WTC11 (cell line): ENCODE measurements at regions of chr19 and their contacts with region 1.

Region 1: GRCh38 chr19:48999481-49000325 is 6.0 kb downstream of the RUVBL2 start:
- DNase-seq: peak; percentile 89
- ATAC-seq: peak; percentile 90
- H3K4me3 Mint-ChIP-seq: no peak overlapping the region; the same call in 1 of the 2 replicates
- H3K27ac Mint-ChIP-seq: peak overlapping the region; percentile 88
- H3K4me1 Mint-ChIP-seq: peaks cover 14% of the 10 kb centered on the region
- H3K27me3 Mint-ChIP-seq: no peaks in the 10 kb centered on the region
- CTCF ChIP-seq: peak; percentile 48; the same call in 1 of the 2 replicates

Region 2: DNA sequence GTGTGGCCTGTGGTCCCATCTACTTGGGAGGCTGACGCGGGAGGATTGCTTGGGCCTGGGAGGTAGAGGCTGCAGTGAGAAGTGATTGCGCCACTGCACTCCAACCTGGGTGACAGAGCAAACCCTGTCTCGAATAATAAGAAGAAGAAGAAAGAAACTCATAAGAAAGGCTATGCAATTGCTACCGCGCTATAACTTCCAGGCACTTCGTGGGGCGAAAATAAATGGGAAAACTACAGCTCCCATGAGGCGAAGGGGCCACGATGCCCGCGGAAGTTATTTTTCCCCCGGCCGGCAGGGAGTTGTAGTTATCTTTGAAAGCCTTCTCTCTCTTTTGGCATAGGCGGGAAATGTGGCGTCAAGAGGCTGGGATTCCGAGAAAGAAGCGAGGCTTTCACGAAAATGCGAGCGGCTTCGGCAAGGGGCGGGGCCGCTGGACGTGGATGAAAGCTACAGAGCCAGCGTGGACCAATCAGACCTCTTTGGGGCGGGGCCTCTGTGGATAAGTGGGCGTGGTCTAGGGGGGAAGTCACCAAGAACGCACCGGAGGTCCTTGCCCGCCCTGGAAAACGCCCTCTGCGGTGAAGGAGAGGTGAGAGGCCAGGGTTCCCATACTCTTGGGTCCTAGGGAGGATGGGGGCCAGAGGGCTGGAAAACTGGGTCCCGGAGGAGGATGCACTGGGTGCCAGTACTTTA is 99.8 kb before region 1 on chr19 and contains the start of gene NUCB1:
- CTCF ChIA-PET with region 1: interaction called, 10 read pairs
- POLR2A ChIA-PET with region 1: no interaction called
- DNase-seq: peak; percentile 100
- ATAC-seq: peak; percentile 87
- H3K4me3 Mint-ChIP-seq: peak within 1 kb of the TSS; percentile 97
- H3K27ac Mint-ChIP-seq: peak within 1 kb of the TSS; percentile 99
- H3K4me1 Mint-ChIP-seq: peaks cover 11% of the 10 kb centered on the region
- H3K27me3 Mint-ChIP-seq: peaks cover 9% of the 10 kb centered on the region
- CTCF ChIP-seq: no peak
- total RNA-seq, gene NUCB1: 145 to 153 TPM (median 149 TPM) in 3 replicates

Region 3: DNA sequence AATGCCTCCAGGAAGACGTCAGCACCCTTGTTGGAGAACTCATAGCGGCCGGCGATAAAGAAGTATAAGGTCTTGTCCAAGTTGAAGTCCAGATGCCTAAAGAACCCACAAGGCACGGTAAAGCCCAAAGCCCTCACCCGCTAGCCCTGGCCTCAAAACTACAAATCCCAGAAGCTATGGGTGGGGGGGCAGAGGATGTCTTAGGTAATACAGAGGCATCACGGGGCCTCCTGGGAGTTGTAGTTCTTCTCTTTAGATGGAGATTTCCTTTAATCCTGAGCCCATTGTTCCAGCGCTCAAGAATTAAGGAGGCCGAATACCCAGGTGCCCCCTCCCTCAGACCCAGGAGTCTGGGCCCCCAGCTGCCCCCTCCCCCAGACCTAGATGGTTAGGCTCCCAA is 17.4 kb before region 1 on chr19:
- CTCF ChIA-PET with region 1: interaction called, 16 read pairs
- POLR2A ChIA-PET with region 1: no interaction called
- DNase-seq: no peak
- ATAC-seq: peak; percentile 49
- H3K4me3 Mint-ChIP-seq: no peak overlapping the region
- H3K27ac Mint-ChIP-seq: no peak overlapping the region
- H3K4me1 Mint-ChIP-seq: no peaks in the 10 kb centered on the region
- H3K27me3 Mint-ChIP-seq: no peaks in the 10 kb centered on the region
- CTCF ChIP-seq: no peak

Region 4: GRCh38 chr19:49017666-49018351 is 18.1 kb after region 1 on chr19:
- CTCF ChIA-PET with region 1: interaction called, 78 read pairs
- POLR2A ChIA-PET with region 1: no interaction called
- DNase-seq: peak; percentile 66
- ATAC-seq: peak; percentile 71
- H3K4me3 Mint-ChIP-seq: peak overlapping the region; percentile 73
- H3K27ac Mint-ChIP-seq: no peak overlapping the region
- H3K4me1 Mint-ChIP-seq: peaks cover 23% of the 10 kb centered on the region
- H3K27me3 Mint-ChIP-seq: peaks cover 45% of the 10 kb centered on the region
- CTCF ChIP-seq: no peak

Region 5: DNA sequence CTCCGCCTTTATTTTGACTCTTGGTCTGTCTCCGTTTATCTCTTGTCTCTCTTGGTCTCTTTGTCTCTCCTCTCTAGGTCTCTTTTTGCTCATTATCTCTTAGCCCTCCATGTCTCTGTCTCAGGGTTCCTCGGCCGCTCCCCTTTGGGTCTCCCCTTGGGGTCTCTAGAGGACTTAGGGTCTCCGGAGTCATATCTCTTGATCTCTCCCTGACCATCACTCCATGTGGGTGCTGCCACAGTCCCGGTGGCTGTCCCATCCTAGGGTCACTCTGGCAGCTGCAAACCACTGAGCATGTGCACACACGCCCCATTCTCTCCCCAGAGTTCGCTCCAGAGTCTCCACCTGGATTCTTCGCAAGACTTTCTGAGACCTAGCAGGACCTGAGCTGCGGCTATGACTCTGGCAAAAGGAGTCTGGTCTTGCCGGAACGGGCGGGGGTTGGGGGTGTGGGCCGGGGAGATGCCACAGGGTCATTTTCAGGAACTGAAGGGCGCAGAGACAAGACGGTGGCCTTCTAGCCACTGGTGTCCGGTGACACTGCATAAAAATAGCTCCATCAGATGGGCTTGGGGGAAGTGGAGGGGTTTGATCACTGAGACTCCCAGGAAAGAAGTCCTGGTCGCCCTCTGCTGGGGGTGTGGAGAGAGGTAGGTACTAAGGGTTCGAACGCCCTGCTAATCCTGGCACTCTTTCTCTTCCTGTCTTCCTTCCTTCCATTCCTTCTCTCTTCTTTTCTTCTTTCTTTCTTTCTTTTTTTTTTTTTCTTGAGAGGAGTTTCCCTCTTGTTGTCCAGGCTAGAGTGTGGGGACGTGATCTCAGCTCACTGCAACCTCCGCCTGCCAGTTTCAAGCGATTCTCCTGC is 74.0 kb after region 1 on chr19:
- CTCF ChIA-PET with region 1: interaction called, 38 read pairs
- POLR2A ChIA-PET with region 1: no interaction called
- DNase-seq: peak; percentile 68
- ATAC-seq: peak; percentile 23; the same call in 1 of the 2 replicates
- H3K4me3 Mint-ChIP-seq: peak overlapping the region; percentile 68
- H3K27ac Mint-ChIP-seq: no peak overlapping the region
- H3K4me1 Mint-ChIP-seq: peaks cover 8% of the 10 kb centered on the region; the same call in 1 of the 2 replicates
- H3K27me3 Mint-ChIP-seq: peaks cover 78% of the 10 kb centered on the region
- CTCF ChIP-seq: no peak; the same call in 1 of the 2 replicates

Region 6: GRCh38 chr19:49200238-49200862 is 200.6 kb after region 1 on chr19:
- CTCF ChIA-PET with region 1: interaction called, 17 read pairs
- POLR2A ChIA-PET with region 1: no interaction called
- DNase-seq: peak; percentile 45
- ATAC-seq: peak; percentile 73
- H3K4me3 Mint-ChIP-seq: no peak overlapping the region
- H3K27ac Mint-ChIP-seq: no peak overlapping the region
- H3K4me1 Mint-ChIP-seq: no peaks in the 10 kb centered on the region
- H3K27me3 Mint-ChIP-seq: no peaks in the 10 kb centered on the region
- CTCF ChIP-seq: no peak